Cardiac septum (tissue), 1 donor: ENCODE measurements at regions of chr5 and their contacts with region 1.

Region 1: DNA sequence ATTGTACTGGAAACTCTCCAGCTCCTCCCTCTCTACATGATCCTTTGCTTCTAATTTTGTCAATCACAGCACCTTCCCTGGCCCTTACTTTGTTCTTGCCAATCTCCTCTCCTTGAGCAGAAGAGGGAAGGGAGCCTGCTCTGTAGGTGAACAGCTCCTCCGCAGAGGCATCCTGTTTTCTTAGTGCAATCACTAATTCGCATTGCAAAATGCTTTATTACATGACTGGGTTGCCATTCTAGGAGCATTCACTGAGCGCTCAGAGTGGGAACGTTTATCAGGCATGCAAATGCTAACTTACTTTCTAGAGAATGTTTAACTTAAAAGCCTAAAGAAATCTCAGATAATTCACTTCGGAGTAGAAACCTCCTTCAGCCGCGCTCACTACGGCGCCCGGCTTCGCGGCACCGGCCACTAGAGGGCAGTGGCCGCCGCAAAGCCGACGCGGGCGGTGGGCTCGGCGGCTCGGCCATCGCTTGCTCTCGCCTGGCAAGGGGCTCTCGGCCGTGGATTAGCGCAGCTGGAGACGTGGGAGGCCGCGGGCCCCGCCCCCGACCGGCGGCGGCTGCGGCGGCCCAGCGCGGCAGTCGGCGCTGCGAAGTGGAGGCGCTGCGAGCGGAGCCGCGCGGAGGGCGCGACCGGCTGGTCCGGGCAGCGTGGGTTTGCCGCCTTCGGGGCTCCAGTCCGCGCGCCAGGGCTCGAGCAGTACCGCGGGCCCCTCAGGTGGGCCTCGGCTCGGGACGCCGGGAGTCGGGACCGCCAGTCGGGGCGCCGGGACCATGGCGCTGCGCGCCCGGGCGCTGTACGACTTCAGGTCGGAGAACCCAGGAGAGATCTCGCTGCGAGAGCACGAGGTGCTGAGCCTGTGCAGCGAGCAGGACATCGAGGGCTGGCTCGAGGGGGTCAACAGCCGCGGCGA is at the start of gene SNX18:
- DNase-seq: peak; percentile 96
- total RNA-seq, gene SNX18: 24.2 TPM

Region 2: DNA sequence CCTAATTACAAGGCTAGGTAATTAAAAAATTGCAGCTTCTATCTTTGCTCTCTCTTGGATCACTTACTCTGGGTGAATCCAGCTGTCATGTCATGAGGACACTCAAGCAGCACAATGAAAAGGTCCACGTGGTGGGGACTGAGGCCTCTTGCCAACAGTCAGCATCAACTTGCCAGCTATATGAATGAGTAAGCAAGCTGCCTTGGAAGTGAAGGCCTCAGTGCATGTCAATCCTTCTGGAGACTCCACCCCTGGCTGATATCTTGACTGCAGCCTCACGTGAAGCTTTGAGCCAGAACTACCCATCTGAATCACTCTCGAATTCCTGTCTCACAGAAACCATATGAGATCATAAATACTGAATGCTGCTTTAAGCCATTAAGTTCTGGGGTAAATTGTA is 140.6 kb after region 1 on chr5:
- intact Hi-C with region 1: loop called (anchors 5 kb)
- DNase-seq: no peak

Region 3: DNA sequence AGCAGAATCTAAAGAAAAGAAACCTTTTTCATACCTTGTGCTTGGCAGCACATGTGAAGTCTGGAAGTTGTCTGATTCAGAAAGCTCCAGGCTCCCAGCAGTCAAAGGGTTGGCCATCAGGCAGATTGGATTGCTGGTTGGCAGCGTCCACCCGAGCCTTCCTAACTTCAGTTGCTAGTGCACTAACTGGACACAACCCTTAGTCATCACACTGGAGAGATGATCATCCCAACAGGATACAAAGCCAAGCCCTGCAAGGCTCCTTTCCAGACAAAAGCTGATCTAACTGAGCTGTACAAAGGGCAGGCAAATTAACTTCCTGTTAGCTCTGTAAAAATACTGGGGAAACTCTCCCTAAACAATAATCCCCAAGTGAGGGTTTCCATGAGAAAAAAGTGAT is 185.7 kb after region 1 on chr5:
- intact Hi-C with region 1: loop called (anchors 5 kb)
- DNase-seq: no peak

Region 4: DNA sequence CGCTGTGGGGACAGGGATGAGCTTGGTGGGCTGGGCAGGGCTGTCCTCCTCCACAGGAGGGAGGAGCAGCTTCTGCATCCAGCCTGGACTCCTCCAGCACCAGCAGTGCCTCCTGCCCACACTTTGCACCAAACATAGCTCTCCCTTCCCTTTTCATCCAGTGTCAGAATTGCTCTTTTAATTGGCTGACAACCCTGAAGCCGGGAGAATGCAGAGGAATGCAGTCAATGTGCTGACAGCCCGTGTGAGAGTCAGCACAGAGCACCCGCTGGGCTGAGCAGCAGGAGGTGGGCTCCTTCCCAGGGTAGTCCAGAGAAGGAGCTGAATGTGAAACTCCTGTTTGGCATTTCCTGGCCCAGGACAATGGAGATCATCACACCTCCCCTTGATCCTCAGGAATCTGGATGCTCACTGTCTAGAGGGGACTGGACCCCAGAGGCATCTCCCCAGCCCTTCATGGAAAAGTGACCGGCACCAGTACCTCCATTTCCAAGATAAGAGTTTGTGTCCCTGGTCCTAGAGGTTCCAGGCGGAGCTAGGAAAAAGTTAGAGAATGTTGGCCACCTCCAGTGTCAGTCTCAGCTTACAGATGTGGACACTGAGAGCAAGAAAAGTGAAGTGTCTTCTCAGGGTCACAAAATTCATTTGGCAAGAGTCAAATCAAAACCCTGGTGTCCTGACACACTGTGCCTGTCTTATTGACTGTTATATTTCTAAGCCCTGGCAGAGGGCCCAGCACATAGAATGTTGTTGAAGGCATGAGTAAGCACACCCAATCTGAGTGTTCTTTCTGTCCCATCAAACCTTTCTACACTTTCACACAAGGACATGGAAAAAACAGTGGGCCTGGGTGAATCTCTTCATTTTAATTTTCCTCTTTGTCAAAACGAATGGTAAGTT is 202.2 kb after region 1 on chr5:
- intact Hi-C with region 1: loop called (anchors 5 kb)
- DNase-seq: peak; percentile 77

Region 5: DNA sequence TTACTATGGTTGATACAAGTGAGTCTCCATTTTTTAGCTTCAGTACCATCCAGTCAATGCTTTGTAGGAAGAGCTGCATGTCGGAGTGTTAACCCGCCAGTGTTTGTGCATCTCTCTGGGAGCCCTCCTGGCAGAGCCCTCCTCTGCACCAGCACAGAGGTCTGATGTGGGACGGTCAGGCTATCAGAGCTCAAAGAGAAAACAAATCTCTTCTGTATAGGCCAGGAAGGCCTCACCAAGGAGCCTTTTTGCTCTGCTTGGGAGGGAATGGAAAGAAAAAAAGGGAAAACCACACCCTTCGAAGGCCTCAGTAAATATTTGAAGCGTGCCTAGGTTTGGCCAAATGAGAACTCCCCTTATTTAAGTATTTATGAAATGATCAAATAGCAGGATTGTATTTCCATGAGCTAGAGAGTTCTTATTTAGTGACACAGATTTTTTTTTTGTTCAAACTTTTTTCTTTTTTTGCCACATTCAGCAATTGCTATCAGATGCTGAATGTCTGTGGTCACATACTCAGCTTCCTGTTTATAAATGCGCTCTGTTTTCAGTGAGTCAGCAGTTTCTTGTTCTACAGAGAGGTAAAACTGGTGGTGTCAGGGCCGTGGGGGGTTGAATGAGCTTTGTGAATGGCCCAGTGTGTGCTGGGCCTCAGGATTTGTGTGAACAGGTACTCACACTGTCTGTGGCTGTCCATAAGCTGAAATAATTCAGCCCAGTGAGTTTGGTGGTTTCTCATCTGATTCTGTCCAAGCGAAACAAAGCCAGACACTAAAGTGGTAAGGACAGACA is 226.8 kb after region 1 on chr5:
- intact Hi-C with region 1: loop called (anchors 2 kb)
- DNase-seq: no peak

Region 6: GRCh38 chr5:54844905-54845566 is 327.6 kb after region 1 on chr5:
- intact Hi-C with region 1: loop called (anchors 1 kb)
- DNase-seq: no peak

Region 7: DNA sequence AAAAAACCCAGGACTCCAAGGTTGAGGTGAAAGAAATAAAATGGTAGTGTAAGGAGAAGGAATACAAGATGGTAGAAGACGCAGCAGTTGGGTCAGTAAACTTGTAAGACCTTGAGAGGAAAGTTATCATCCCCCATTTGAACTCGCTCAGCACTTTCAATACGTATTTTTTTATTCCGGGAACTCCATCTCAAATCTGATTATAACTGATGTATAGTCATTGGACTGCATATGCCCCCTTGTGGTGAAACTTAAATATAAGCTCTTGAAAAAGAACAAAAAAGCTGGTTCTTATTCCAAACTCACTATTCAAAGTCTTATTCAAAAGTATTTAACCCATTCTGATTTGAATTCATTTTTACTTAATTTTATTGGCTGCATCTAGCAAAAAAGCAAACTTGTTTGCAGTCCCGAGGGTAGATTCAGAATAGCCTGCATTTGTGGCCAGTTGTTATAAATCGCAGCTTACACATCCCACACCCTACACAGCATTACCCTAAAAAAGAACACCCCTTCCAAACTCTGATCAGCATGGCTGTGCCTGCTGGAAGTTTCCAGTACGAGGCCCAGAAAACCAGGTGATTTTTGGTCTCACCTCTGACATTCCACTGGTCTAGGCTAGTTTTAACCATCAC is 350.0 kb after region 1 on chr5:
- intact Hi-C with region 1: loop called (anchors 2 kb)
- DNase-seq: no peak